Lower leg skin (tissue), 4 donors: ENCODE measurements at regions of chr12 and their contacts with region 1.

Region 1: GRCh38 chr12:27733052-27733656 is 22.5 kb downstream of the MRPS35 start:
- DNase-seq: no peak
- H3K4me3 ChIP-seq: no peak overlapping the region
- CTCF ChIP-seq: peak in 1 of 3 donors; percentile 46
- POLR2A ChIP-seq: no peak

Region 2: DNA sequence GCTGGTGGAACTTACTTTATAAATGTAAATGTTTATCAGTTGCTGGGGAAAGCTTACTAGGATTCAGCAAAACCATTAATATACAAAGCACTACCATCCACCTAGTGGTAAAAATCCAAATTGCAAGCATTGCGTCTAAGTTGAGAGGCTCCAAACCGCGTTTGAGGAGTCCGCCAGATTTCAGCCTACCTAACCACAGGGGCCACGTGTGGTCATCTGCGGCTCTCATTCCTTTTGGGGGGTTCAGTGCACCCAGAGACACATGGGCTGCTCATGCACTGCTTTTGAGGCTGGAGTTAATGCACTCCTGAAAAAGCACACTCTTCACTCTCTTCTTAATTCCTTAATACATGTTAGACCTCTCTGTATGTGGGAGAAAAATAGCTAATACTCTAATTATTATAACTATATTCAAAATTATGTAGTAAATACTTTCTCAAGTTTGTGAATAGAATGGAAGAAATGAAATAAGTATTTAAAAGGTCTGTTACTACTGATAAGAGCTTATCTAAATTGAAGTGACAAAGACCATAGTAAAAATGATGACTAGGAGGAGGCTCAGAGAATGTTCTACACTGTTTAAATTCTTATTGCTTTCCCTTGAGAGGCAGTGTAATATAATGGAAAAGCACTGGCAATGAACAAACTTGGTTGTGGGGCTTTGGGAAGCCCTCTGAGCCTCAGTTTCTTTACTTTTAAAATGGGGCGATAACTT is 88.3 kb after region 1 on chr12:
- intact Hi-C with region 1: loop called (anchors 10 kb)
- DNase-seq: peak in 1 of 2 donors; percentile 17
- H3K4me3 ChIP-seq: no peak overlapping the region
- CTCF ChIP-seq: peak in 1 of 3 donors; percentile 30
- POLR2A ChIP-seq: no peak

Region 3: DNA sequence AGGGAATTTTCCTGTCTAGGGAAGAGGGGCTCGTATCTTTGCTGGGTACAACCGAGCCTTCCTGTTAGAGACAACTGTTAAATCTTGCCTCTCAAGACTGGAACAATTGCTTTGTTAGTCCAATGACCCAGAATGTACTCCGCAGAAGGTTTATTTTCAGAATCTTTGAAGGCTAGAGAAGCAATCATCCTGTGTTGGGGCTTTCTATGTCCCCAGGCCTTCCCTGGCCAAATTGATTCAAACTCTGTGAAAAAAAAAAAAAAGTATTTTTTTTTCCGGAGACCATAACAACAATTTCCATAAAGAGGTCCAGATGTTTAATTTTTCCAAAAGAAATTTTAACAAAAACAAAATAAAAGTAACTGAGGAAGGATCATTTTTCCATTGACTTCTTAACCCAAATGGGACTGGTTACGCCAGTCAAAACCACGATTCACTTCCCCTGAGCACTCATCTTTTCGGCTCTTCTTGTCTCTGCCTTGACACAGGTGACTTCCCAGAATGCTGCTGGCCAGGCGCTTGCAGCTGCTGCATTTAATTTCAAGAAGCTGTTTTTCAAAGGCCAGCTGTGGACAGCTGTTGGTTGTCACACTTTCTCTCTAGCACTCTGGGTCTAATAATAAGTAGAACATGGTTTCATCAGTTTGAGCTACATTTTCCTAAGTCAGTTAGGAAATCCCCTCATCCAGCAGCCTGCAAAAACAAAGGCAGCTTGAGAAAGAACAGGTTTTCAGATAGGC is 128.4 kb after region 1 on chr12:
- intact Hi-C with region 1: no loop called
- DNase-seq: peak in 1 of 2 donors; percentile 29
- H3K4me3 ChIP-seq: no peak overlapping the region
- CTCF ChIP-seq: no peak
- POLR2A ChIP-seq: no peak

Region 4: GRCh38 chr12:27940756-27941402 is 207.7 kb after region 1 on chr12:
- intact Hi-C with region 1: loop called (anchors 10 kb)
- DNase-seq: peak; percentile 65 to 92
- H3K4me3 ChIP-seq: no peak overlapping the region
- CTCF ChIP-seq: no peak
- POLR2A ChIP-seq: no peak